Stomach (tissue), 19 donors: ENCODE measurements at regions of chr4 and their contacts with region 1.

Region 1: GRCh38 chr4:110003401-110004187 is 90.9 kb downstream of the EGF start:
- DNase-seq: no peak
- H3K4me3 ChIP-seq: no peak overlapping the region
- H3K27ac ChIP-seq: no peak overlapping the region
- H3K4me1 ChIP-seq: no peaks in the 10 kb centered on the region
- H3K27me3 ChIP-seq: peaks cover 0 to 24% (median 0%) of the 10 kb centered on the region in 3 donors
- CTCF ChIP-seq: no peak
- EP300 ChIP-seq: no peak
- POLR2A ChIP-seq: no peak

Region 2: DNA sequence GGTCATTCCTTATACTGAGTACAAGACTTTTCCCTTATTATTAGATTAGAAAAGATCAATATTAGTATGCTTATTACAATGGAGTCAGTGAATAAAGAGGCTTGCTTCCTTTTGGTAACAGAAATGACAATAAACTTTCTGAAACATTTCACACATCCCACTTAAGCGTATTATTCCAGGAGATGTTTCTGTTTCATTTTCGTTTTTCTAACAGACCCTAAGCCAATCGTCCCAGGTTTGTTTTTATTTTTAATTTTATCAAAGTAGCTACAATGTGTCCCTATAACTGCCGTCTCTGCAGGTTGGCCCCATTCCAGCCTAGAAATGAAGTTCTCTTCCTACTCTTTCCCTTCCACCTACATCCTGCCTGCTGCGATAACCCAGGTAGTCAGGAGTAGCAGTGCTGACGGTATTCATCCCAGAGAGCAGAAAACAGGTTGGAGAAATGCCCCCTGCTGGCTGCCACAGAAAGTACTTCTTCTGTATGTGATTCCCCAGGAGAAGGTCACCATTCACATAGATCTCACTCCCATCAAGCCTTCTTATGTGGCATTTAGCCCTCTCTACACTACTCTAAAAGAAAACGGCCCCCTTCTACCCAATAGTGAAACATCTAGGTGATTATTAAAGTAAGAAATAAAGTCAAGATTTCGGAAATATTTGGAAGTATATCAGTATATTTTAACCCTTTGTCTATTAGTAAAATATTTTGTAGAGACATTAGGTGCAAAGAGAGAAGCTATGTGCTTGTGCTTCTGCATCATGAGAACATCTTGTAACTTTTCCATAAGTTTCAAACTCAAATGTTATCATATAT is 512.7 kb after region 1 on chr4:
- intact Hi-C with region 1: loop called (anchors 5 kb)
- DNase-seq: peak; percentile 86 to 90
- H3K4me3 ChIP-seq: peak overlapping the region; percentile 39 to 50 (median 48)
- H3K27ac ChIP-seq: peak overlapping the region in 3 of 5 donors; percentile 26 to 69 (median 49)
- H3K4me1 ChIP-seq: peaks cover 0 to 12% (median 5%) of the 10 kb centered on the region in 4 donors
- H3K27me3 ChIP-seq: peaks cover 0 to 12% (median 0%) of the 10 kb centered on the region in 3 donors
- CTCF ChIP-seq: peak in 5 of 7 experiments; percentile 61 to 84 (median 74)
- EP300 ChIP-seq: no peak
- POLR2A ChIP-seq: no peak